GM13977 (cell line): ENCODE measurements at regions of chrX and their contacts with region 1.

Region 1: GRCh38 chrX:51614353-51615012 is 4.2 kb downstream of the CENPVL3 start:
- DNase-seq: peak; percentile 47
- CTCF ChIP-seq: peak; percentile 68

Region 2: GRCh38 chrX:51743179-51743957 is 128.9 kb after region 1 on chrX and contains the start of gene GSPT2:
- in situ Hi-C with region 1: no loop called
- DNase-seq: peak; percentile 55
- CTCF ChIP-seq: no peak

Region 3: GRCh38 chrX:52261463-52262194 is 647.1 kb after region 1 on chrX:
- in situ Hi-C with region 1: loop called (anchors 25 kb)
- DNase-seq: peak; percentile 84
- CTCF ChIP-seq: peak; percentile 89